GM12878 (cell line): ENCODE measurements at regions of chr3 and their contacts with region 1.

Region 1: GRCh38 chr3:126134219-126134975 is 46.0 kb downstream of the ALDH1L1 start:
- DNase-seq: no peak
- ATAC-seq: peak; percentile 95
- H3K4me3 ChIP-seq: no peak overlapping the region
- H3K27ac ChIP-seq: no peak overlapping the region
- H3K4me1 ChIP-seq: no peaks in the 10 kb centered on the region
- H3K27me3 ChIP-seq: peaks cover 0 to 3% of the 10 kb centered on the region in 2 experiments; a peak in 1 of 4 replicates
- CTCF ChIP-seq: peak; percentile 53 to 74 (median 72); a peak in 5 of 6 replicates
- EP300 ChIP-seq: no peak
- POLR2A ChIP-seq: no peak
- RAD21 ChIP-seq: peak; percentile 66

Region 2: DNA sequence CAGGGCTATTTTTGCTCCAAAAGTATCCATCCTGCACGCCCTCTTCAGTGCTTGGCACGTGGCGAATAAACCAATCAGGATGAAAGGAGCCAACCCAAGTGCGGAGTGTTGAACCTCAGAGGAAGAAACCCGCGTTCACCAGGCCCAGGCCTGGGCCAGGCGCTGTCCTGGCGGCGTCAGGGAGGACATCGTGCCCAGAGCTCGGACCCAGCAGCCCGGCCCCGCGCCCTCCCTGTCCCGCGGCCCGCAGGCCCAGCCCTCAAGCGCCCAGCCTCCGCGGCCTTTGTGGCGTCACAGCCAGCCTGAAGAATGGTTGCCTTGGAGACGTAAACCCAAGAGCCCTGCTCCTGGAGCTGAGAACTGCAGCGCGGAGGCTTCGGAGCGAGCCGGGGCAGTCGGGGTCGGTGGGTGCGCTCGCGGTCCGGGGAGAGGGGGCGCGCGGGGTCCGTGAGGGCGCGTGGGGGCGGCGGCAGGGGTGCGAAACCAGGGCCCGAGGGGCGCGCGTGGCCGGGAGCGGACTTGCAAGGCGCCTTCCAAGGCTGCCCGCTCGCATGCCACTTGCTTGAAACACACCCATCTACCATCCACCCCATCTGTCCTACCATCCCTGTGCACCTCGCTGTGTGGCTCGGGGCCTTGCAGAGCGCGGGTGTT is 260.3 kb after region 1 on chr3 and contains the start of gene CFAP100:
- CTCF ChIA-PET with region 1: interaction called, 4 read pairs
- POLR2A ChIA-PET with region 1: no interaction called
- RAD21 ChIA-PET with region 1: interaction called, 3 read pairs
- SMC1A ChIA-PET with region 1: no interaction called
- in situ Hi-C with region 1: loop called (anchors 10 kb)
- intact Hi-C with region 1: loop called (anchors 1 kb)
- DNase-seq: no peak
- ATAC-seq: no peak
- H3K4me3 ChIP-seq: no peak within 1 kb of the TSS
- H3K27ac ChIP-seq: no peak within 1 kb of the TSS
- H3K4me1 ChIP-seq: peaks cover 15% of the 10 kb centered on the region
- H3K27me3 ChIP-seq: peaks cover 0 to under 1% of the 10 kb centered on the region in 2 experiments; a peak in 2 of 4 replicates
- CTCF ChIP-seq: no peak
- EP300 ChIP-seq: no peak
- POLR2A ChIP-seq: no peak
- RAD21 ChIP-seq: no peak
- polyA plus RNA-seq, gene CFAP100: not detected